IMR-90 (cell line): ENCODE measurements at regions of chr15 and their contacts with region 1.

Region 1: GRCh38 chr15:98904544-98904943 is 103.0 kb downstream of the PGPEP1L start:
- DNase-seq: peak; percentile 75
- ATAC-seq: peak; percentile 66
- H3K4me3 ChIP-seq: no peak overlapping the region
- H3K27ac ChIP-seq: peak overlapping the region; percentile 60; the same call in 1 of the 2 replicates
- H3K4me1 ChIP-seq: peaks cover 51% of the 10 kb centered on the region
- H3K27me3 ChIP-seq: no peaks in the 10 kb centered on the region
- CTCF ChIP-seq: peak; percentile 82
- POLR2A ChIP-seq: 0 out of 2 replicates have a peak, but pooled peaks have one; percentile 30
- RAD21 ChIP-seq: peak; percentile 85

Region 2: GRCh38 chr15:98727115-98728085 is 177.1 kb before region 1 on chr15:
- CTCF ChIA-PET with region 1: no interaction called
- POLR2A ChIA-PET with region 1: no interaction called
- dilution Hi-C with region 1: no loop called
- in situ Hi-C with region 1: no loop called
- intact Hi-C with region 1: loop called (anchors 5 kb)
- DNase-seq: peak; percentile 93
- ATAC-seq: peak; percentile 98
- H3K4me3 ChIP-seq: peak overlapping the region; percentile 16; the same call in 1 of the 2 replicates
- H3K27ac ChIP-seq: peak overlapping the region; percentile 98
- H3K4me1 ChIP-seq: peaks cover 32% of the 10 kb centered on the region
- H3K27me3 ChIP-seq: no peaks in the 10 kb centered on the region
- CTCF ChIP-seq: no peak
- POLR2A ChIP-seq: no peak
- RAD21 ChIP-seq: no peak

Region 3: DNA sequence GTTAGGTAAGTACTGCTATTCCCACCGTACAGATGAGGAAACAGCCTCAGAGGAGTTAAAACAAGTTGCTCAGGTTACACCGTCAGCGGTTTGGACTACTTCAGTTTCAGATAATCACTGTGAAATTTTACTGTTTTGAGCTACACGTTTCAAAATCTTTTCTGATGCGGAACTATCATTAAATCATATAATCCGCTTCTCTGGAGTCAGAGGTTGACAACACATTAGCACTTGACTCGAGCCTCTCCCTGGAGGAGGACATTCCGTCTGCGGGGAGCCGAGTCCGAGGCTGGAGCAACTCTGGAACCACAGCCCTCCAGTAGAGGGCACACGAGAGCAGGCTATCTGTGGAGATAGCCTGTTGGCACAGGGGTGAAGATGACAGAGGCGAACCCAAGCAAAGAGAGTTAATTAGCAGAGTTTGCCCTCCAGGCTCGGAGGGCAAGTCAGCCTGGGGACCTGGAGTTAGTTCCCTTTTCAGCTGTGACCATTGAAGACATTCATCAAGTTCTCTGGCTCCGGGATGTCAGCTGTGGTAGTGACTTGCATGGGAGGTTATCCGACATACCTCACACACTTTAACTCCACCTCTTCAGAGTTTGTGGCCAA is 125.0 kb before region 1 on chr15:
- CTCF ChIA-PET with region 1: no interaction called
- POLR2A ChIA-PET with region 1: no interaction called
- dilution Hi-C with region 1: no loop called
- in situ Hi-C with region 1: loop called (anchors 25 kb)
- intact Hi-C with region 1: loop called (anchors 5 kb)
- DNase-seq: peak; percentile 65
- ATAC-seq: peak; percentile 91
- H3K4me3 ChIP-seq: no peak overlapping the region
- H3K27ac ChIP-seq: no peak overlapping the region
- H3K4me1 ChIP-seq: peaks cover 14% of the 10 kb centered on the region
- H3K27me3 ChIP-seq: no peaks in the 10 kb centered on the region
- CTCF ChIP-seq: peak; percentile 84
- POLR2A ChIP-seq: no peak
- RAD21 ChIP-seq: peak; percentile 87

Region 4: DNA sequence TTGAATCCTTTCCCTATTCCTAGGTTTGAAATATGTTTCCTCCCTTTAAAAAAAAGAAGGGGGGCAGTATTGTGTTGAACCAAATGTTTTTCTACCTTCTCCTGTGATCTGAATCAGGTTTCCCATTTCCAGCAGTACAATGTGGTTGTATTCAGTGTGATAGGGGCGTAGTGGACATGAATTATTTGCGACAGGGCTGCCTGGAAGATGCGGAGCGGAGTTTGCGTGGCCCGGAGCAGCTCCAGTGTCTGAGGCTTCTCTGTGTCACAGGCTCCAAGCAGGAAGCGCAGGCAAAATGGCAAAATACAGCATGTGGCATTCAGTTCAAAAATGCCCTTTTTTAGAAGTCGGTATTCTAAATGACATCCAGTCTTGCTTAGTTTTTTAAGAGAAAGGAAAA is 51.4 kb before region 1 on chr15:
- CTCF ChIA-PET with region 1: no interaction called
- POLR2A ChIA-PET with region 1: no interaction called
- dilution Hi-C with region 1: no loop called
- in situ Hi-C with region 1: no loop called
- intact Hi-C with region 1: loop called (anchors 1 kb)
- DNase-seq: peak; percentile 93
- ATAC-seq: peak; percentile 47
- H3K4me3 ChIP-seq: peak overlapping the region; percentile 61
- H3K27ac ChIP-seq: peak overlapping the region; percentile 70; the same call in 1 of the 2 replicates
- H3K4me1 ChIP-seq: peaks cover 40% of the 10 kb centered on the region
- H3K27me3 ChIP-seq: no peaks in the 10 kb centered on the region
- CTCF ChIP-seq: 0 out of 2 replicates have a peak, but pooled peaks have one; percentile 6
- POLR2A ChIP-seq: no peak; the same call in 1 of the 2 replicates
- RAD21 ChIP-seq: peak; percentile 39; the same call in 1 of the 2 replicates

Region 5: GRCh38 chr15:99536422-99537040 is 632.0 kb after region 1 on chr15:
- CTCF ChIA-PET with region 1: no interaction called
- POLR2A ChIA-PET with region 1: no interaction called
- dilution Hi-C with region 1: no loop called
- in situ Hi-C with region 1: no loop called
- intact Hi-C with region 1: no loop called
- DNase-seq: peak; percentile 65
- ATAC-seq: peak; percentile 60
- H3K4me3 ChIP-seq: no peak overlapping the region
- H3K27ac ChIP-seq: no peak overlapping the region
- H3K4me1 ChIP-seq: peaks cover 8% of the 10 kb centered on the region
- H3K27me3 ChIP-seq: no peaks in the 10 kb centered on the region
- CTCF ChIP-seq: no peak
- POLR2A ChIP-seq: no peak
- RAD21 ChIP-seq: no peak